MCF 10A (cell line): ENCODE measurements at regions of chr9 and their contacts with region 1.

Region 1: DNA sequence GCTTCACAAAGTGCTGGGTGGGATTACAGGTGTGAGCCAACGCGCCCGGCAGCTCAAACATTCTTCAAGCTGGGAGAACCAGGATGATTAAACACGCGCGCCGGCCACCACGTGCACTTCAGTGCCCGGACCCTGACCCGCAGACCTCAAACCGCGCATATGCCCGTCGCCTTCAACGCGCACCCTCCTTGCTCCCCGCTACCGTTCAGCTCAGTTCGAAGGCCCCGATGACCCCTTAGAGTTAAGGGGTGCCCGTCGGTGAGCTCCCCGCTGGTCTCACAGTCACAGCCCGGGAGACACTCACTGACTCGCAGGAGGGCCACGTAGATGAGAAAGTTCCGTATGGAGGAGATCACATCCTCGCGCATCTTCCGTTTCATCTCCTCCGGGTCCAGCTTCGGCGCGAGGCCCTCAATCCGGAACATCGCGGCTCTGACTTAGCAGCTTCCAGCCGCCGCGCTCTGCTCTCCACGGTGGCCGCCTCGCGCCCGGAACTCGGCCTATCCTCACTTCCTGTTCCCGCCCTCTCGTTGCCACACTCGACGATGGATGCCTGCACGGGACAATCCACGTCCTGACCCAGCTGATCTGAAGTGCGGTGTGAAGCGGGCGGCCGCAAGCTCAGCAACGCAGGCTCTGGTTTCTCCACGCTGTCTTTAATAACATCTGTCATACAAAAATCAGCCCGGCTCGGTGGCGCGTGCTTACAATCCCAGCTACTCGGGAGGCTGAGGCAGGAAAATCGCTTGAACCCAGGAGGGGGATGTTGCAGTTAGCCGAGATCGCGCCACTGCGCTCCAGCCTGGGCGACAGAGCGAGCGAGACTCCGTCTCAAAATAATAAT is at the start of gene TOMM5:
- DNase-seq: peak; percentile 93
- H3K4me3 Mint-ChIP-seq: peak within 1 kb of the TSS; percentile 96
- H3K27ac Mint-ChIP-seq: peak within 1 kb of the TSS; percentile 98
- H3K4me1 Mint-ChIP-seq: peaks cover 16% of the 10 kb centered on the region
- H3K27me3 Mint-ChIP-seq: no peaks in the 10 kb centered on the region
- CTCF ChIP-seq: no peak
- total RNA-seq, gene TOMM5: 151 and 164 TPM in 2 replicates

Region 2: GRCh38 chr9:37520641-37521040 is 71.7 kb before region 1 on chr9:
- CTCF ChIA-PET with region 1: no interaction called
- POLR2A ChIA-PET with region 1: no interaction called
- intact Hi-C with region 1: no loop called
- DNase-seq: no peak
- H3K4me3 Mint-ChIP-seq: no peak overlapping the region
- H3K27ac Mint-ChIP-seq: no peak overlapping the region
- H3K4me1 Mint-ChIP-seq: no peaks in the 10 kb centered on the region
- H3K27me3 Mint-ChIP-seq: no peaks in the 10 kb centered on the region
- CTCF ChIP-seq: no peak

Region 3: DNA sequence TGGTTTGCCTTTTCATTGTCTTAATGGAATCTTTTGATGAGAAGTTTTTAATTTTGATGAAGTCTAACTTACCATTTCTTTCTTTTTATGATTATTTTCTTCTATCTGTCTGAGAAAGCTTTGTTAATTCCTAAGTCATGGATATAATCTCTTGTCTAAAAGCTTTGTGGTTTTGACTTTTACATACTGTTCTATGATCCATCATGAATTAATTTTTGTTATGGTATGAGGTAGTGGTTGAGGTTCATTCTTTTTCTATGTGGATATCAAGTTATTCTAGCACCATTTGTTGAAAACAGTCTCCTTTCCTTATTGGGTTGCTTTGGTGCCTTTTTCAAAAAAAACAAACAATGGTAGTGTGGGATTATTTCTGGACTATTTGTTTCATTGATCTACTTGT is 36.5 kb before region 1 on chr9:
- CTCF ChIA-PET with region 1: no interaction called
- POLR2A ChIA-PET with region 1: no interaction called
- intact Hi-C with region 1: no loop called
- DNase-seq: no peak
- H3K4me3 Mint-ChIP-seq: no peak overlapping the region
- H3K27ac Mint-ChIP-seq: no peak overlapping the region
- H3K4me1 Mint-ChIP-seq: no peaks in the 10 kb centered on the region
- H3K27me3 Mint-ChIP-seq: no peaks in the 10 kb centered on the region
- CTCF ChIP-seq: no peak

Region 4: GRCh38 chr9:37575921-37576721 is 16.2 kb before region 1 on chr9 and contains the start of gene FBXO10:
- CTCF ChIA-PET with region 1: interaction called, 7 read pairs
- POLR2A ChIA-PET with region 1: interaction called, 80 read pairs
- intact Hi-C with region 1: no loop called
- DNase-seq: peak; percentile 55
- H3K4me3 Mint-ChIP-seq: peak within 1 kb of the TSS; percentile 78
- H3K27ac Mint-ChIP-seq: peak within 1 kb of the TSS; percentile 54
- H3K4me1 Mint-ChIP-seq: peaks cover 18% of the 10 kb centered on the region
- H3K27me3 Mint-ChIP-seq: no peaks in the 10 kb centered on the region
- CTCF ChIP-seq: no peak
- total RNA-seq, gene FBXO10: 3.4 and 4.6 TPM in 2 replicates

Region 5: DNA sequence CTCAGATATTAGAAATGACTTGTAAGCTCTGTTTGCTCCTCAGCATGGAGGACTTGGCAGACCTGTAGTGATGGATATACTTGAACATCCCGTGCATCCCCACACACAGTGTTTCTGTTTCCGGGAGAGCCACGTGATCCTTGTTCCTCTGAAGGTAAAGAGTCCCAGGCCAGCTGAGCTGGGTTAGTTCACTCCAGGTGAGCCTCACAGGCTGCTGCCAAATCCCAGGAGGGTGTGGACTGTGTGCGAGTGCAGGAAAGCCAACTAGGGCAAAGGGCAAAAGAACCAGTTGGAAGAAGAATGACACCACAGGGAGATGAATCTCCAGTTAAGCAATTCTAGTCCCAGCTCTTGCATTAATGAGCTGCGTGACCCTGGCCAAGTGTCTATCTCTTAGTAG is 10.5 kb after region 1 on chr9:
- CTCF ChIA-PET with region 1: interaction called, 4 read pairs
- POLR2A ChIA-PET with region 1: interaction called, 29 read pairs
- intact Hi-C with region 1: no loop called
- DNase-seq: peak; percentile 86
- H3K4me3 Mint-ChIP-seq: no peak overlapping the region
- H3K27ac Mint-ChIP-seq: no peak overlapping the region
- H3K4me1 Mint-ChIP-seq: peaks cover 10% of the 10 kb centered on the region
- H3K27me3 Mint-ChIP-seq: peaks cover 34% of the 10 kb centered on the region
- CTCF ChIP-seq: no peak

Region 6: GRCh38 chr9:37784616-37785483 is 192.5 kb after region 1 on chr9 and contains the start of gene EXOSC3:
- CTCF ChIA-PET with region 1: interaction called, 6 read pairs
- POLR2A ChIA-PET with region 1: interaction called, 13 read pairs
- intact Hi-C with region 1: no loop called
- DNase-seq: peak; percentile 91
- H3K4me3 Mint-ChIP-seq: peak within 1 kb of the TSS; percentile 98
- H3K27ac Mint-ChIP-seq: peak within 1 kb of the TSS; percentile 98
- H3K4me1 Mint-ChIP-seq: peaks cover 12% of the 10 kb centered on the region
- H3K27me3 Mint-ChIP-seq: no peaks in the 10 kb centered on the region
- CTCF ChIP-seq: no peak
- total RNA-seq, gene EXOSC3: 44.8 and 50.9 TPM in 2 replicates

Region 7: DNA sequence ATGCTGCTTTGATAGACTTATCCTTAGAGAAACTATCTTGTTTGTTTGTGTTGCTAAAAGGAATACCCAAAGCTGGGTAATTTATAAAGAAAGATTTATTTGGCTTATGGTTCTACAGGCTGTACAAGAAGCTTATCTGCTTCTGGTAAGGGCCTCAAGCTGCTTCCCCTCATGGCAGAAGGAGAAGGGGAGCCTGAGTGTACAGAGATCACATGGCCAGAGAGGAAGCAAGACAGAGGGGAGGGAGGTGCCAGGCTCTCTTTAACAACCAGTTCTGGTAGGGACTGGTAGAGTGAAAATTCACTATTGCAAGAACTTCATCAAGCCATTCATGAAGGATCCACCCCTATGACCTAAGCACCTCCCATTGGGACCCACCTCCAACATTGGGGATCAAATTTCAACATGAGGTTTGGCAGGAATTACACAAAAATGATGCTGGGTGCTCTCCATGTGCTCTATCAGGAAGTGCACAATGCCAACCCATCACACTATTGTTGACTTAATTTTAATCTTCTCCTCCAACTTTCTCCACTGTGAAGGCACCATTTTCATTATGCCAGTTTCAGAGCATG is 591.8 kb after region 1 on chr9:
- CTCF ChIA-PET with region 1: no interaction called
- POLR2A ChIA-PET with region 1: no interaction called
- intact Hi-C with region 1: no loop called
- DNase-seq: peak; percentile 84
- H3K4me3 Mint-ChIP-seq: no peak overlapping the region
- H3K27ac Mint-ChIP-seq: no peak overlapping the region
- H3K4me1 Mint-ChIP-seq: peaks cover 21% of the 10 kb centered on the region
- H3K27me3 Mint-ChIP-seq: no peaks in the 10 kb centered on the region
- CTCF ChIP-seq: no peak